IMR-90 (cell line): ENCODE measurements at regions of chr4 and their contacts with region 1.

Region 1: DNA sequence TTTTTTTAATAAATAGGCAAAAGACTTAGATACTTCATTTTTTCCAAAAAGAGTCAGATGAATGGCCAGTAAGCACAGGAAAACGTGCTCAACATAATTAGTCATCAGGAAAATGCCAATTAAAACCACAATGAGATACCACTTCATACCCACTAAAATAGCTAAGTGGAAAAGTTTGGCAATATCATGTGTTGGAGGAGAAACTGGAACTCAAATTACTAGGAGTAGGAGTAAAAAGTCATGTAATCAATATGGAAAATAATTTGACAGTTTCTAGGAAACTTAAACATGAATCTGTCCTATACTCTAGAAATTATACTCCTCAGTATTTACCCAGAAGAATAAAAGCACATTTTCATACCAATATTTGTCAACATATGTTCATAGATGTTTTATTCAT is 449.8 kb downstream of the INPP4B start:
- DNase-seq: peak; percentile 36
- ATAC-seq: no peak
- H3K4me3 ChIP-seq: no peak overlapping the region
- H3K27ac ChIP-seq: no peak overlapping the region
- H3K4me1 ChIP-seq: no peaks in the 10 kb centered on the region
- H3K27me3 ChIP-seq: no peaks in the 10 kb centered on the region
- CTCF ChIP-seq: no peak
- POLR2A ChIP-seq: no peak
- RAD21 ChIP-seq: no peak

Region 2: GRCh38 chr4:142379277-142380057 is 16.8 kb before region 1 on chr4:
- CTCF ChIA-PET with region 1: no interaction called
- POLR2A ChIA-PET with region 1: no interaction called
- dilution Hi-C with region 1: no loop called
- in situ Hi-C with region 1: no loop called
- intact Hi-C with region 1: loop called (anchors 1 kb)
- DNase-seq: peak; percentile 90
- ATAC-seq: peak; percentile 87
- H3K4me3 ChIP-seq: no peak overlapping the region
- H3K27ac ChIP-seq: peak overlapping the region; percentile 98
- H3K4me1 ChIP-seq: peaks cover 9% of the 10 kb centered on the region
- H3K27me3 ChIP-seq: no peaks in the 10 kb centered on the region
- CTCF ChIP-seq: no peak
- POLR2A ChIP-seq: no peak
- RAD21 ChIP-seq: no peak